ENCODE measurements at regions of chr10 and their contacts with region 1.

Region 1: DNA sequence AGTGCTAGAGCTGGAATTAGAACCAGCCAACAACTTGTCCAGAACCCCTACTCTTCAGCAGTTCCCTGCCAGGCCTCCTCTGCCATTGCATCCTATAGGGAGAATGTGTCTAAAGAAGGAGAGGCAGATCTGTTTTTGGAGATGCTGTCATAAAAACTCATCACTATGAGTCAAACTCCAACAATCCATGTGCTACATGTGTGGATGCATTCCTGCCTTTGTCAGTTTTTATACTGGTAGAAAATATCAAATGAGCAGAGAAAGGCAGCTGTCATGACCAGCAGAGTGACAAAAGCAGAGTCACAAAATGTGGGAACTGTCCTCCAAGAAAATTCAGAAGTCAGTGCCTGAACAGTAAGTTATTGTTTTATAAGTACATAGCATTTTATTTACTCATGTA is 93.0 kb downstream of the ABLIM1 start:
- DNase-seq: no peak
- H3K4me3 ChIP-seq: no peak overlapping the region
- H3K27ac ChIP-seq: peak overlapping the region; percentile 52
- H3K4me1 ChIP-seq: peaks cover 74% of the 10 kb centered on the region
- H3K27me3 ChIP-seq: no peaks in the 10 kb centered on the region
- CTCF ChIP-seq: no peak

Region 2: DNA sequence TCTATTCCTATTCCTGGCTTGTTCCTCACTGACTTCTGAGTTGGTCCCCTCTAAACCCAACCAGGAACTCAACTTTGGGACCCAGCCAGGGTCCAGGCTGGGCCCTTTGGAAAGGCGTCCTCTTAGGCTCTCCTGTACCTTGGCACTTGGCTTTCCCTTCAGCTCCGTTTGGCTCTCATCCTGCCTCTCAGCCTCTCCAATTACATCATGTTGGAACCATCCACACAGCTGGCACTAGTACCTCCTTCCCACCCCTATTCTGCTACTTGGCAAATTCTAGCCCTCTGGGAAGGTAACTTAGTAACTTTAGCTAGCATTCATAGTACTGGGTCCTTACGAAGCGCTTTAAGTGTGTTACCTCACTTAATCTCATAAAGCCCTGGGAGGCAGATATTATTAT is 1217.6 kb before region 1 on chr10:
- intact Hi-C with region 1: no loop called
- DNase-seq: peak; percentile 16
- H3K4me3 ChIP-seq: no peak overlapping the region
- H3K27ac ChIP-seq: no peak overlapping the region
- H3K4me1 ChIP-seq: no peaks in the 10 kb centered on the region
- H3K27me3 ChIP-seq: no peaks in the 10 kb centered on the region
- CTCF ChIP-seq: no peak

Region 3: DNA sequence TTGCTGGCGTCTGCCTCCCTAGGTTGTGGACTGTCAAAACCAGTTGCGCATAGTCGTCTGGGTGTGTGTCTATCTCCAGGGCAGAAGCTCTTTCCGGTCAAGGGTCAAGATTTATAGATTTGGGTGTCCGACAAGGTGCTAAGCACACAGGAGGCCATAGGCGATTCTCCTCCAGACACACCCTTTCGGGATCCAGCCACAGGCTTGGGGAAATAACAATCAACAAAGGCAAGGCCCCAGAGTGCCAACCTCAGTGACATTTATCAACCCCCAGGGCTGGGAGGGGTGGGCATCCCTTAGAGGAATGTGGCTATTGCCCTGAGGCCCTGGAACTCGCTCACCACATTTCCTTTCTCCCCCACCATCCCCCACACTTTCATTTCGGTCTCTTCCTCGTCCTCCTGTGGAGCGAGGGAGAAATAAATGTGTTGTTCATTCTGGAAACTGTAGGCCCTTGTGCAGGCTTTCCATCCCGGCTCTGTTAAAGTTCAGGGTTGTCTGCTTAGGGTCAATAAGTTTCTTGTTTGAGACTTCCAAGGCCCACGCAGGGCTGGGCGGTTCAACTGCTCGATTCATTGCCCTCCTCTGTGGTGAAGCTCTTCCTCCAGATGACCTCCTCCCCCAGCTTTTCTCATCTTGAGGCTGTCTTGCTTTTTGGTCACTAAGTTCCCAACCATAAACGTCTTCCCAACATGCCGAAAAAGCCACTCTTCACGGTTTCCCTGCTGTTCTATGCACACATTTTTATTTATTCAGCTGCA is 218.6 kb before region 1 on chr10:
- intact Hi-C with region 1: no loop called
- DNase-seq: no peak
- H3K4me3 ChIP-seq: no peak overlapping the region
- H3K27ac ChIP-seq: peak overlapping the region; percentile 39
- H3K4me1 ChIP-seq: peaks cover 31% of the 10 kb centered on the region
- H3K27me3 ChIP-seq: peaks cover 28% of the 10 kb centered on the region
- CTCF ChIP-seq: no peak

Region 4: DNA sequence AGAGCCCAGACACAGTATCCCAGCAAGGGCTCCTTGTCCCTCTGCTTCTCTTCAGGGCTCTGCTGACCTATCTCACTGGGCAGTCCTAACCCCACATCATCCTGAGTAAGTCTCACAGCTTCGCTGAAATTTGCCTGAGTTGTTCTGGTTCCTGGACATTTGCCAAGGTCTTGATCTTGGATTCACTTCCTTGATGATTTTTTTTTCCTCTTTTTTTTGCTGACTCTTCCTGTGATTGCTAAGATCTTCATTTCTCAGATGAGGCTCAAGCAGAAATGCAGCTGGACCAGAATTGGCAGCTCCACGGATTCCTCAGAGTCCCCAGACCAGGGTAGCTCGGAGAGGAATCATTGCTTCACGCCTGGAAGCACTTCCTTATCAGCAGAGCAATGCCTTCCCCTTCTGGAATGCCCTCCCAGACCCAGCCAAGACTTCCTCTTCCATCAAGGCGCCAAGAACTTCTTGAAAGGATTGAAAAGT is 152.1 kb before region 1 on chr10:
- intact Hi-C with region 1: no loop called
- DNase-seq: peak; percentile 28
- H3K4me3 ChIP-seq: no peak overlapping the region
- H3K27ac ChIP-seq: peak overlapping the region; percentile 54
- H3K4me1 ChIP-seq: peaks cover 15% of the 10 kb centered on the region
- H3K27me3 ChIP-seq: peaks cover 20% of the 10 kb centered on the region
- CTCF ChIP-seq: no peak

Region 5: DNA sequence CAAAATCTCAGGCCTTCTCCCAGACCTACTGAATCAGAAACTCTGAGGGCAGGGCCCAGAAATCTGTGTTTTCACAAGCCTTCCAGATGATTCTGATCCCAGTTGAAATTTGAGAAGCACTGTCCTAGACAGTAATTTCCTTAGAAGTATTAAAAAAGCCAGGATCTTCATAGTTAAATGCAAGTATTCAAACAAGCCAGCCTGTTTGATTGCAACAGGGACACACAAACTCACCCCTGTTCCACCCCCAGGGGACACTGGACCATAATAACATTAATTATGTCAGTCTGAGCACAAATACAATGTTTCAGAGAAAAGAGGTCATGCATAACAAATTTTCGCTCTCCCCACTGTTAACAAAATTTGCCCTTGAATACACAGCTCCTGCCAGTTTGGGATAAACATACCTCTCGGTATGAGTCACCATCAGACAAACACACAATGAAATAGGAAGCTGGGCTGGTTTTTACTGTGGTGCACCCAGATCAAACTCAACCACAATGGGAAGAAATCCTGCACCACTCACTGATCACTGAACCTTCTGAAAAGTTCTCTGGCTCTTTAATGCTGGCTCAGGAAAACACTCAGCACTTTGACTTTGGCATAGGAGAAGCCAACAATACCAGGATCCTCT is 58.7 kb after region 1 on chr10:
- intact Hi-C with region 1: loop called (anchors 10 kb)
- DNase-seq: no peak
- H3K4me3 ChIP-seq: peak overlapping the region; percentile 76
- H3K27ac ChIP-seq: peak overlapping the region; percentile 92
- H3K4me1 ChIP-seq: peaks cover 95% of the 10 kb centered on the region
- H3K27me3 ChIP-seq: no peaks in the 10 kb centered on the region
- CTCF ChIP-seq: no peak